Cardiac septum (tissue), 1 donor: ENCODE measurements at regions of chr20 and their contacts with region 1.

Region 1: DNA sequence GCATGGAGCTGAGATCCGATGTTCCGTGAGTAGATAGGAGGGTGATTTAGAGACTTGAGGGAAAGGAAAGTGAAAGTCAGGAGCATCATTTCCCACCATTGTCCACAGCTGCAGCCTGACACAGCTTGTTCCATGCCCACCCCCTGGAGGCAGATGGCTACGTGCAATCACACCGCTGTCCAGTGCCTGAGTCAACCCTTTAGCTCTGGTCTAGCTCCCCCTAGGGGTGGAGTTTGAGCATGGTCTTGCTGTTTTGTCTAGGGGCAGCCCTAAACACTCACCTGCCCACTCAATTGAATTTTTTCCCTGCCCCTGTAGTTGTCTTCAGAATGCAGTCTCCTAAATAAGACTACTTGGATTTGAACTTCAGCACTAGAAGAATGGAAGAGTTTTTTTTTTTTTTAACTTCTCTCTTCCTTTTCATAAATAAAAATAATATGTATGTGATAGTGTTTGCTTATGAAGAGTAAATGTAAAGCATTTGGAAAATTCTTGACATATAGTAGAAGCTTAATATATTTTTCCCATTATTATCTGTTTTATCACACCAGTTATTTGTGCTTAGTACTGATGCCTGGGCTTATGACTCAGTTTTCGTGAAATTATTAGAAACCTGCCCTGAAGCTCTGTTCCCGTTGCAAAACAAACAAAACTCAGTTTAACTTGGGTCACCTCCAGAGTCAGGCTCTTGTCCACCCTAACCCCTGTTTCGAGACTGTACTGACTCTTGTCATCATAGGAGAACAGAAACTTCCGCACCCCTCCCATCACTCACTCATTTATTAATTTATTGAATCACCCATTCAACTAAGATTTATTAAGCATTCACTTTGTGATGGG is 814.8 kb downstream of the MAFB start:
- DNase-seq: peak; percentile 83

Region 2: DNA sequence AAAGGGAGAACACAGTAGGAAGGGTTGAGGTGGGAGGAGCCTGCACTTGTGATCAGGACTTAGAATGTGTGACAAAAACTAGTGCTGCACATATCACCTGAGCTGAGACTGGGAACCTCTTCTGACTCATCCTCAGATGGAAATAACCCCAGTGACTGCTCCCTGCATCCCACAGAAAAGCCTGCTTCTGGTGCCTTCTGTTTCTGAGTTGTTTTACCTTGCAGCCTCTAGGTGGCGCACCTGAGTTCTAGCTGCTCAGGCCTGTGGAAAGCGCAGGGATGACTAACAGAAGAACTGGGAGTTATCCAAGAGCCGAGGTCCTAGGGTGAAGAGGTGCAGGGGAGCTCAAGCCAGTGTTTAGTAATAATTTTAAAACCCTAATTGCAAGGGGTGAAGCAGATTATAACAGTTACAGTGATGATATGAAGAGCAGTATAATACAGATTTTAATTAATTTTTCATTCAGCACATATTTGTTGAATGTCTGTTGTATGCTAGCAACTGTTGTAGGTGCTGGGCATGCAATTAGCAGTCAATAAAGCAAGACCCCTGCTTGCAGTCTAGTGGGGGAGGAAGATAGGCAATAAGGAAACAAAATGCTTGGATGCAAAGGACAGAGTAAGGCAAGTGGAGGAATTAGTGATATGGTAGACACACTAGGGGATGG is 609.6 kb before region 1 on chr20:
- intact Hi-C with region 1: loop called (anchors 1 kb)
- DNase-seq: no peak

Region 3: DNA sequence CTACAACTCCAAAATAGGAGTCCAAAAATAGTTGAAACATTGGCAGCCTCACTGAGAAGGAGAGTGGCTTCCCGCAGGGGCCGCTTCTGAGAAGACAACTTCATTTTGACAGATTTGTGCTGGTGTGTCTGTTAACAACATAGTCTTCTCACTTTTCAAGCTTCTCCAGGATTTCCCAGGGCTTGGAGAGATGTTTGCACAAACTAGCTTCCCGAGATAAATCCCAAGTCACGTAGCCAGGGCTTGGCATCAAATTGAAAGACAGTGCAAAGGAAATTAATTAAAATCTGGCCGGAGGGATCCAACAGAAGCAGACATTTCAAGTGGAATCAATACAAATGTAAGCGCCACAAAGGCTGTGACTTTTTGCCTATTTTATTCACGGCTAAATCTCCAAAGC is 281.9 kb before region 1 on chr20:
- intact Hi-C with region 1: loop called (anchors 10 kb)
- DNase-seq: no peak

Region 4: DNA sequence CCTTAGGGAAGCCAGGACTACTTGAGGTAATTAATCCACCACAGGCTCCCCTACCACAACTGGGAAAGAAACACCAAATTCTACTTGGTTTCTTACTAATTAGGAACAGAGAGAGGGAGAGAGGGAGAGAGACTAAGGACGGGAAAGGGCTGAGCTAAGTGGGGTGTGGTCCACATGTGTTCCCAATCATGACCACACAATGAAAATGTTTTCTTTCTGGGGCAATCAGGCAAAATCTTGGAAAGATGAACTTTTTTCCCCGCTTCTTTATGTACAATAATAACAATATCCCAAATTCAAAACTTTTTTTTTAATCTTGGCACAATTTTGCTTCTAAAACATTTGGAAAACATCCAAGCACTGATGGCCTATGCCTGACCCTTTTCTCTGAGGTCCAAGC is 80.4 kb after region 1 on chr20:
- intact Hi-C with region 1: no loop called
- DNase-seq: no peak